Heart right ventricle (tissue), 16 donors: ENCODE measurements at regions of chr5 and their contacts with region 1.

Region 1: DNA sequence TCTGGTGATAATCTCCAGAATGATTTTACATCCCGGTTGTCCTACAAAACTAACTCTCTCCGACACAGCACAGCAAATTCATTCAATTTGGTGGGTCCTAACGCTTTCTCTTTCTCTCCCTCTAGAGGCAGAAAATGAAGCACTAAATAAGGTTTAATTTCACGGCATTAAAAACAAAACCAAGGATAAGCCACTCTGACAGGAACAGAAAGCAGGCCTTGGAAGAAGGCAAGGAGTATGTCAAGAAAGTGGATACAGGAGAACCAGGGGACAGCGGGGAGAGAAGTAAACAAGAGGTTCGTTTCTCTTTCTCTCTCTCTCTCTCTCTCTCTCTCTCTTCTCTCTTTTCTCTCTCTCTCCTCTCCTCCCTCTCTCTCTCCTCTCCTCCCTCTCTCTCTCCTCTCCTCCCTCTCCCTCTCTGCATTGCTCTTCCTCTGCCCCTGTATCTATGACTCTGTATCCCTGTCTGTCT is 49.8 kb downstream of the EBF1 start:
- DNase-seq: peak in 1 of 2 donors; percentile 27
- ATAC-seq: peak; percentile 45 to 77 (median 62)
- H3K4me3 ChIP-seq: peak overlapping the region in 7 of 10 donors; percentile 10 to 51 (median 43)
- H3K27ac ChIP-seq: peak overlapping the region; percentile 75 to 93 (median 83)
- H3K4me1 ChIP-seq: peaks cover 0 to 82% (median 42%) of the 10 kb centered on the region in 9 donors
- H3K27me3 ChIP-seq: peaks cover 0 to 41% (median 3%) of the 10 kb centered on the region in 7 donors
- CTCF ChIP-seq: peak; percentile 14 to 66 (median 47)

Region 2: GRCh38 chr5:158725297-158725851 is 324.5 kb before region 1 on chr5:
- intact Hi-C with region 1: loop called in 1 of 10 experiments (anchors 5 kb)
- DNase-seq: no peak
- ATAC-seq: no peak
- H3K4me3 ChIP-seq: no peak overlapping the region
- H3K27ac ChIP-seq: peak overlapping the region in 2 of 10 donors; percentile 22 to 80
- H3K4me1 ChIP-seq: peaks cover 0 to 48% (median 27%) of the 10 kb centered on the region in 9 donors
- H3K27me3 ChIP-seq: no peaks in the 10 kb centered on the region
- CTCF ChIP-seq: no peak

Region 3: GRCh38 chr5:158898185-158899177 is 151.4 kb before region 1 on chr5:
- intact Hi-C with region 1: loop called in 1 of 10 experiments (anchors 10 kb)
- DNase-seq: no peak
- ATAC-seq: no peak
- H3K4me3 ChIP-seq: no peak overlapping the region
- H3K27ac ChIP-seq: peak overlapping the region in 1 of 10 donors; percentile 12
- H3K4me1 ChIP-seq: peaks cover 0 to 56% (median 17%) of the 10 kb centered on the region in 9 donors
- H3K27me3 ChIP-seq: peaks cover 0 to 3% (median 0%) of the 10 kb centered on the region in 7 donors
- CTCF ChIP-seq: no peak

Region 4: DNA sequence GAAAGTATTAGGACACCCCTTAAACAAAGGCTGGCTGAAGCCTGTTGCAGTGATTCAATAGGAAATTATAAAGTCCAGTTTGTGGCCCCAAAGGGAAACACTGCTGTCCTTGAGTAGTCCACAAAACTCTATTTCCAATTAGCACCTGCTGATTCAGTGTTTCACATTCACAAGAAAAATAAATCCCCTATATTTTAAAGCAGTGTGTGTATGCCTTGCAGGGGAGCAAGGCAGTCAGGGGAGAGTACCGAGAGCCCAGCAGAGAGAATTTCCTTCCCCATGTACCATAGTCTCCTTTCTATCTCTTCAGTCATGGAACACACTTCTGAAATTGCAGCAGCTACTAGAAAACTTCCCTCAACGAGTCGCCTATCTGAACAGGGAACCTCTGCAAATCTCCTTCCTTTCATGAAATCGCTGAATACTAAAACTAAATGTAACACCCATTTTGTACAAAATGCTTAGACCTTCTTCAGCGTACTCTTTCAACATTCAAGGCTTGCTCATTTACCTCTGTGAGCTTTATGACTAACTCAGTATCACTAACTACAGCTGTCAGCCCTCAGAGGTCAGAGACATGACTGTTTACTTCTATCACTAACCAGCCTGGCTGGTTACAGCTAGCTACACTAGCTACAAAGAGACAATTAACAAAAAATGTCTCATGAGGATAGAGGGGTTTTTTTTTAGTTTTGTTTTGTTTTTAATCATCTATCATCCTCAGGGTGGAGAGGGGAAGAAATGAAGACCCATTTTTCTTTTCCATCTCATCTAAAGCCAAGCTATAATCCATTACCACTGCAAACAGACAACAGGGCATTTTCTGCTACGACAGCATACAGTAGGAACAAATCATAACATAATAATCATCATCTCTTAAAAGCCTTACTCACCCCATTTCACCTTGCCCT is 138.8 kb before region 1 on chr5:
- intact Hi-C with region 1: loop called in 1 of 10 experiments (anchors 10 kb)
- DNase-seq: no peak
- ATAC-seq: peak in 3 of 8 donors; percentile 26 to 41 (median 39)
- H3K4me3 ChIP-seq: no peak overlapping the region
- H3K27ac ChIP-seq: peak overlapping the region in 1 of 10 donors; percentile 30
- H3K4me1 ChIP-seq: peaks cover 0 to 38% (median 6%) of the 10 kb centered on the region in 9 donors
- H3K27me3 ChIP-seq: no peaks in the 10 kb centered on the region
- CTCF ChIP-seq: no peak

Region 5: DNA sequence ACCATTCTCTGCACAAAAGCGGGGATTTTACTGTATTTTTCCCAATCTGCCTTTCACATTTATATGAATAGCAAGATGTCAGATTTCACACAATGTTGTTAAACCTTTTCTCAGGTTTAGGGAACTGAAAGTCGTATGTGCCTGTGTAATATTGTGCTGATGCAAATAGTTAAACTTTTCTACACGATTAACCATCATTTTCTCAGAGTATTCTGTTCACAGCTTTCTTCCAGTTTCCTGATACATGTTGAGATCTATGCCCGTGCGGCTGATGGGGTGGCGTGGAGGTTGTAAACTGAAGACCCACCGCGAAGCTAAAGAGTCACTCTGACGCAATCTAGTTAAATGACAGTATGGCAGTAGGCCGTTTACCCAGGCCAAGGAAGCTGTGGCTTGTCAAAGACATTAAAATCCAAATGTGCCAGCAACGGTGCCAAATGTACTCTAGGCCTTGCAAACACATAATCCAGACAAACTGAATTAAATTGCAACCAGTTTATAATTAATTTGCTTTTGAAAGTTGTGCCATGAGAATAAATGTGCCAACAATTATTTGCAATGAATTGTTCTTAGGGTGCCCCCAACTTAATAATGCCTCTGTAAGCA is 95.8 kb before region 1 on chr5:
- intact Hi-C with region 1: loop called in 1 of 10 experiments (anchors 10 kb)
- DNase-seq: no peak
- ATAC-seq: no peak
- H3K4me3 ChIP-seq: no peak overlapping the region
- H3K27ac ChIP-seq: no peak overlapping the region
- H3K4me1 ChIP-seq: peaks cover 4 to 44% (median 18%) of the 10 kb centered on the region in 9 donors
- H3K27me3 ChIP-seq: no peaks in the 10 kb centered on the region
- CTCF ChIP-seq: no peak

Region 6: GRCh38 chr5:159010661-159011442 is 39.0 kb before region 1 on chr5:
- intact Hi-C with region 1: loop called in 1 of 10 experiments (anchors 5 kb)
- DNase-seq: peak; percentile 29 to 57
- ATAC-seq: peak; percentile 74 to 87 (median 80)
- H3K4me3 ChIP-seq: peak overlapping the region in 7 of 10 donors; percentile 7 to 41 (median 32)
- H3K27ac ChIP-seq: peak overlapping the region in 9 of 10 donors; percentile 71 to 91 (median 82)
- H3K4me1 ChIP-seq: peaks cover 4 to 70% (median 30%) of the 10 kb centered on the region in 9 donors
- H3K27me3 ChIP-seq: peaks cover 0 to 3% (median 0%) of the 10 kb centered on the region in 7 donors
- CTCF ChIP-seq: no peak

Region 7: GRCh38 chr5:159419576-159419975 is 369.7 kb after region 1 on chr5:
- intact Hi-C with region 1: no loop called
- DNase-seq: no peak
- ATAC-seq: no peak
- H3K4me3 ChIP-seq: no peak overlapping the region
- H3K27ac ChIP-seq: no peak overlapping the region
- H3K4me1 ChIP-seq: no peaks in the 10 kb centered on the region
- H3K27me3 ChIP-seq: no peaks in the 10 kb centered on the region
- CTCF ChIP-seq: no peak